Panc1 (cell line): ENCODE measurements at regions of chr1 and their contacts with region 1.

Region 1: DNA sequence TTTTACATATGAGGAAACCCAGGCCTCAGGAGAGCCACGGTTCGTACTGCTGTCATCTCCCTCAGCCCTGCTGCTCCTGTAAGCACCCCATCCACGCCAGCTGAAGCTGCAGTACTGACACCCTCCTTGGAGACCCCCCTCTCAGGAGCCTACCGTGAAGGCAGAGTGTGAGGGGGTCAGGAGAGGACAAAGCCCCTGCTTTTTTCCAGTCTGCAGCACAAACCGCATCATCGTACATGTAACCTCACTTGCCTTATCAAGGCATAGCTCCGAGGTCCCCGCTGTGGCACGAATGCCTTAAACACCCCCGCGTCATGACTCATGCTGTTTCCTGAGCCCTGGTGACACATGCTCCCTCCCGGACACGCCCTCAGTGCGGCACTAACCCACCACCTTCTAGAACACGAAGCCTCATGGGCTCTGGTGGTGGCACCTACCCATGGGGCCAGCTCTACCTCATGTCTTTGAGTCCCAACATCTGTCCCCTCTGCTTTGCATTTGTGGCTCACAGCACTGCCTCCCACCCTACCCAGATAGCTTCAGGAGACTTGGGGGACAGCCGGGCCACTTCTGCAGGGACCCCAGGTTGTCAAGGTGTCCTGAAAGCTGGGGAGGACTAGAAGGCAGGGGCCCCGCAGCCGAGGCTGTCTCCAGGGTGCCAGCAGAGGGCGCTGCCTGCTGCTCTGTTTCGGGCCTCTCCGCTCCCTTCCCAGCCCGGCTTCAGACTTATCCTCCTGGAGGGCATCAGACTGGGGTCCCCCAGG is 4.9 kb downstream of the SH3BGRL3 start:
- DNase-seq: peak; percentile 84
- ATAC-seq: peak; percentile 67
- H3K4me3 ChIP-seq: no peak overlapping the region
- H3K27ac ChIP-seq: peak overlapping the region; percentile 59
- H3K4me1 ChIP-seq: peaks cover 23% of the 10 kb centered on the region
- H3K27me3 ChIP-seq: no peaks in the 10 kb centered on the region
- CTCF ChIP-seq: peak; percentile 91

Region 2: DNA sequence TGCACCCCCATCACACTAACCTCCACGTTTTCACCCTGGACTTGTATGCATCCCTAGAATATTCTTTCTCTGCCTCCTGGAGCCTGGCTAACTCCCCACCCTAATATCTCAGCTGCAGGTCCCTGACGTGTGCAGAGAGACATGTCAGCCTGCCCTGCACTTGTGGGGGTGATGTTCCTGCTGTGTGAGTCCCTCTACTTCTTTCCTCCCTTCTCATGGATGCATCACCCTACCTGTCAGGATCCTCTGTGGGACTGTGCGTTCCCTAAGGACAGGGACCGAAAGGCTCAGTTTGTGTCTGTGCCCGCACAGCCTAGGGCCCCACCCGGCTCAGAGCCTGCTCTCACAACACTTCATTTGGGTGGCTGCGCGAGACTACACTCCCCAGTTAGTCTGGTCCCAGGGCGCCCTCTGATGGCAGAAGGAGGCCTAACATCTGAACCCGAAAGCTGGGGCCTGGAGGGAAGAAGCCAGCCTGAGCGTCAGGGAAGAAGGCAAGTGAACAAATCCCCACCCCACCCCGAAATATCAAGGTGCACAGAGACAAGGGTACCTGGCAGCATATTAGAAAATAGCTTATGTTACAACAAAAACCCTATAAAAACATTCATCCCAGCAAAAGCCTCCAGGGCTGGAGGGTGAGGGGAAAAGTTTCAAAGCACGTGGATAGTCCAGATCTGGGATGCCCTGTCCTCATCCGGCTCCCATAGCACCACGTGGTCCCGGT is 36.7 kb after region 1 on chr1:
- CTCF ChIA-PET with region 1: interaction called, 11 read pairs
- POLR2A ChIA-PET with region 1: no interaction called
- in situ Hi-C with region 1: no loop called
- intact Hi-C with region 1: loop called (anchors 2 kb)
- DNase-seq: peak; percentile 61
- ATAC-seq: peak; percentile 96
- H3K4me3 ChIP-seq: no peak overlapping the region
- H3K27ac ChIP-seq: no peak overlapping the region
- H3K4me1 ChIP-seq: no peaks in the 10 kb centered on the region
- H3K27me3 ChIP-seq: no peaks in the 10 kb centered on the region
- CTCF ChIP-seq: peak; percentile 94

Region 3: GRCh38 chr1:26391450-26391849 is 106.7 kb after region 1 on chr1:
- CTCF ChIA-PET with region 1: interaction called, 11 read pairs
- POLR2A ChIA-PET with region 1: no interaction called
- in situ Hi-C with region 1: no loop called
- intact Hi-C with region 1: loop called (anchors 5 kb)
- DNase-seq: no peak
- ATAC-seq: peak; percentile 86
- H3K4me3 ChIP-seq: no peak overlapping the region
- H3K27ac ChIP-seq: no peak overlapping the region
- H3K4me1 ChIP-seq: no peaks in the 10 kb centered on the region
- H3K27me3 ChIP-seq: no peaks in the 10 kb centered on the region
- CTCF ChIP-seq: peak; percentile 89

Region 4: GRCh38 chr1:26417111-26417759 is 132.5 kb after region 1 on chr1:
- CTCF ChIA-PET with region 1: interaction called, 17 read pairs
- POLR2A ChIA-PET with region 1: no interaction called
- in situ Hi-C with region 1: no loop called
- intact Hi-C with region 1: no loop called
- DNase-seq: peak; percentile 70
- ATAC-seq: peak; percentile 97
- H3K4me3 ChIP-seq: no peak overlapping the region
- H3K27ac ChIP-seq: no peak overlapping the region
- H3K4me1 ChIP-seq: no peaks in the 10 kb centered on the region; the same call in 1 of the 2 replicates
- H3K27me3 ChIP-seq: 0 out of 2 replicates have a peak, but pooled peaks cover 4% of the 10 kb centered on the region
- CTCF ChIP-seq: peak; percentile 96